Psoas muscle (tissue), 8 donors: ENCODE measurements at regions of chr2 and their contacts with region 1.

Region 1: GRCh38 chr2:26235085-26235484 is 9.3 kb downstream of the HADHA start:
- DNase-seq: no peak
- ATAC-seq: peak in 1 of 4 donors; percentile 47
- H3K4me3 ChIP-seq: no peak overlapping the region
- H3K27ac ChIP-seq: no peak overlapping the region
- H3K4me1 ChIP-seq: peaks cover 23% of the 10 kb centered on the region
- H3K27me3 ChIP-seq: no peaks in the 10 kb centered on the region
- CTCF ChIP-seq: peak; percentile 37

Region 2: DNA sequence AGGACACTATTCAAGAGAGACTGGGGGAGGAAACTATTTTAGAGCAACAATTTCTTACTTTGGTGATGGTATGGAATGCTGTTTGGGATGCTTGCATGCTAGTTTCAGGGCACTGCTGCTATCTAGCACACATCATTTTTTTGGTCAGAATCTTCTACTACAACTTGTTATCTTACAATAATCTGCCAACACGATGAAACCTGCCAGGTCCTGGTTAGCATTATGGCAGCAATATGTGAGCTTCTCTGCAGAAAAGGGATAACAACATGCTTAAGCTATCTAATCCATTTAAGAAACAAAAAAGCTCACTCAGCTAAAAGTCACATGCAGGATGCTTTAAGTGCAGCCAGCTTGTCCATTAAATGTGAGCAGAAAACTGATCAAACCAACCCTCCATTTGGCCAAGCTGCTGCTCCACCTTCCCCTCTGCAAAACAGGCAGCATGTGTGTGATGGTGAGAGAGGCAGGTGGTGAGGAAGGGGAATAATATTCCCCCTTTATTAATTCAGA is 32.0 kb before region 1 on chr2:
- intact Hi-C with region 1: loop called in 1 of 2 experiments (anchors 5 kb)
- DNase-seq: no peak
- ATAC-seq: no peak
- H3K4me3 ChIP-seq: no peak overlapping the region
- H3K27ac ChIP-seq: no peak overlapping the region
- H3K4me1 ChIP-seq: no peaks in the 10 kb centered on the region
- H3K27me3 ChIP-seq: no peaks in the 10 kb centered on the region
- CTCF ChIP-seq: no peak

Region 3: DNA sequence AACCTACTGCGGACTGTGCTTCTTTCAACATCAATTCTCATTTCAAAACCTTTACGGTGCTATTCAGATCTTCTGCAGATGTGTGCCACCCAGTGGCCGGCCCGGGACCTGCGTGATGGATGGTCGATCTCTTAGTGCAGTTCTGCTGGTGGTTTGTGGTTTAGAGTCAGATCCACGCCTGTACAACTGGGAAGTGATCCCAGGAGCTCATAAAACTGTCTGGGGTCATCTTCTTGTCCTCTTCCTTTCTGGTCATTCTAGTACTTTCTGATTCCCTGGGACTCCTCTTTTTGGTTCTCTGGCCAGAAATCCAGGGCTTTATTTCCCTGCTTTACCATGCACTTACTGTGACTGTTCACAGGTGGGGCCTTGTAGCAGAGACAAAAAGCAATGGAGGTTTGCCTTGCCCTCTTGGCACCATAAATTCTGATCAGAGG is 95.0 kb after region 1 on chr2:
- intact Hi-C with region 1: loop called (anchors 5 kb)
- DNase-seq: peak; percentile 90 to 93
- ATAC-seq: peak; percentile 91 to 98 (median 95)
- H3K4me3 ChIP-seq: no peak overlapping the region
- H3K27ac ChIP-seq: no peak overlapping the region
- H3K4me1 ChIP-seq: peaks cover 3% of the 10 kb centered on the region
- H3K27me3 ChIP-seq: no peaks in the 10 kb centered on the region
- CTCF ChIP-seq: peak; percentile 86

Region 4: GRCh38 chr2:26469092-26469710 is 234.1 kb after region 1 on chr2:
- intact Hi-C with region 1: loop called in 1 of 2 experiments (anchors 5 kb)
- DNase-seq: peak in 1 of 2 donors; percentile 52
- ATAC-seq: no peak
- H3K4me3 ChIP-seq: no peak overlapping the region
- H3K27ac ChIP-seq: no peak overlapping the region
- H3K4me1 ChIP-seq: no peaks in the 10 kb centered on the region
- H3K27me3 ChIP-seq: no peaks in the 10 kb centered on the region
- CTCF ChIP-seq: peak; percentile 44

Region 5: DNA sequence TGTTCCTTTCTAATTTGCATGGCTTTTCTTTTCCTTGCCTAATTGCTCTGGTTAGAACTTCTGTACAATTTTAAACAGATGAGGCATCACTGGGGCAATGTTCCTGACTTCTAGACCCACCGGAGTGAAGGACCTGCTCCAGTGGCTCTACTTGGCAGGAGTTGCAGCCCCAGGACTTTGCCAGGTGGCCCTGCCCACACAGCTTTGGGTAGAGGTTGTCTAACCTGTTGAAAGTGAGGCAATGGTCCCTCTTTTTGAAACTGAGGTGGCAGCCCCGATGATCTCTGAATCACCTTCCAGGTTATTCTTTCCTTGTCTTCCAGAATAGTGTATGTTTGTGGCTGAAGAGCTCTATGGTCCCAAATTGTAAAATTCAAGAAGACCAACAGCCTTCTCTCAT is 1317.9 kb after region 1 on chr2:
- intact Hi-C with region 1: no loop called
- DNase-seq: no peak
- ATAC-seq: no peak
- H3K4me3 ChIP-seq: no peak overlapping the region
- H3K27ac ChIP-seq: no peak overlapping the region
- H3K4me1 ChIP-seq: no peaks in the 10 kb centered on the region
- H3K27me3 ChIP-seq: no peaks in the 10 kb centered on the region
- CTCF ChIP-seq: no peak